Activated naive CD4-positive, alpha-beta T cell treated with anti-CD3 and anti-CD28 coated beads for 36 hours (primary cell): ENCODE measurements at regions of chr5 and their contacts with region 1.

Region 1: DNA sequence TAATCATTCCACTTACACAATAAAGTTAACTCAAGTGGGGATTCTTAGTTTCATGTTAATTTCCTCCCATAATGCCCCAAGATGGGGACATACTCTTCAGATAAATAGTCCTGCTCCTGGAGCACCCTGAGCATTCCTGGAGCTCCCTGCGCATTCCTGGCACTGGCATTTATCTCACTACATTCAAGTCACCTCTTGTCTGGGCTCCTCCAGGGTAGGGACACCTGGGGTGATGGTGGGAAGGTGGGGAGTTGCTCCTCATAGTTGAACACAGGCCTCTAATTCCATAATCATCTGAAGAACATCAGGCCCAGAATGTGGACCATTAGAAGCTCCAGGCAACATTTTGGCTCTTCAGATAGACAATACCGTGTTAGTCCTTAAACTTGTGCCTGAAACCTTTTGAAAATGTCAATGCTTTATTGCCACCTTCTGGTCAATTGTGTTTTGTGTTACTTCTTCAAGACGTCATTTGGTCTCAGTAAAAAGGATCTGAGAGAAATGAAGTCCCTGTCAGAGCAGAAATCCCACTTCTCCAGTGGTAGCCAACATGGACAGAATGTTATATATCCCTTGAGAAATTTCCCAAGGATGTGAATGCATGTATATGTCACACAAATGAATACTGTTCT is 14.2 kb upstream of the AGGF1 start:
- DNase-seq: no peak
- H3K4me3 Mint-ChIP-seq: no peak overlapping the region
- H3K27ac Mint-ChIP-seq: no peak overlapping the region
- H3K4me1 Mint-ChIP-seq: peaks cover 3% of the 10 kb centered on the region
- H3K27me3 Mint-ChIP-seq: peaks cover 17% of the 10 kb centered on the region

Region 2: DNA sequence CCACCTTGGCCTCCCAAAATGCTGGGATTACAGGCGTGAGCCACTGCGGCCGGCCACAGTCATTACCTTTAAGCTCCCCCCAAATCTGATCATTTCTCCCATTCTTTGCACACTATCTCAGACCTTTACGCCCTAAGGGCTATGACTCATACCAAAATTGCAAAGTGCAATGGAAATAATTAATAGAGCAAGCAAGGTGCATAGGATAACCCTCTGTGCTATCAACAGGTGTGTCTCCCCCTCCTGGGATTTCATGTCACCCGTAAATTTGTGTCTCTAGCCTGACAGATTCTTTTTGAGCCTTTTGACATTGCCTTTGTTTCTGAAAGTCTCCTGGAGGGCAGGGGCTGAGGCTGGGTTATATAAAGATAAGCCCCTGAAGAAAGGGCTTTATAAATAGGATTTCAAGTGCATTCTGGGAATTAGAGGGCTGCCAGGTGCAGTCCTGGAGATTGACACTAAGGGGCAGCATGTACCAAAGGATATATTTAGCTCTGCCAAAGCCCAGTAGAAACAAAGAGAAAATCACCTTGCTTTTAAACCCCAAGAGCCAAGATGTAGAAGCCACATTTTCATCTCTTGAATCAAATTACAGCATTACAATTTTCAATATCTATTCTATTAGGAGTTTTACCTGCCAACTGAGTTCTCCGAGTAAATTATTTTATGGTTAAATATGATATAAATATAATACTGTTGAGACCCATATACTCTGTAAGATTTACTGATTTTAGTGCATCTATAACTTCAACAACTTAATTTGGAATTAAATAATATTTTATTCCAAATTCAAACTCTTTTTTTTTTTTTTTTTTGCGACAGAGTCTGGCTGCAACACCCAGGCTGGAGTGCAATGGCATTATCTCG is 148.0 kb before region 1 on chr5:
- CTCF ChIA-PET with region 1: interaction called, 12 read pairs
- intact Hi-C with region 1: loop called (anchors 1 kb)
- DNase-seq: peak; percentile 83
- H3K4me3 Mint-ChIP-seq: no peak overlapping the region
- H3K27ac Mint-ChIP-seq: no peak overlapping the region
- H3K4me1 Mint-ChIP-seq: no peaks in the 10 kb centered on the region
- H3K27me3 Mint-ChIP-seq: no peaks in the 10 kb centered on the region